Head of caudate nucleus (tissue), 42 donors: ENCODE measurements at regions of chr11 and their contacts with region 1.

Region 1: GRCh38 chr11:64094463-64095260 is 58.9 kb downstream of the FLRT1 start:
- DNase-seq: peak in 23 of 42 donors; percentile 43 to 84 (median 66)

Region 2: DNA sequence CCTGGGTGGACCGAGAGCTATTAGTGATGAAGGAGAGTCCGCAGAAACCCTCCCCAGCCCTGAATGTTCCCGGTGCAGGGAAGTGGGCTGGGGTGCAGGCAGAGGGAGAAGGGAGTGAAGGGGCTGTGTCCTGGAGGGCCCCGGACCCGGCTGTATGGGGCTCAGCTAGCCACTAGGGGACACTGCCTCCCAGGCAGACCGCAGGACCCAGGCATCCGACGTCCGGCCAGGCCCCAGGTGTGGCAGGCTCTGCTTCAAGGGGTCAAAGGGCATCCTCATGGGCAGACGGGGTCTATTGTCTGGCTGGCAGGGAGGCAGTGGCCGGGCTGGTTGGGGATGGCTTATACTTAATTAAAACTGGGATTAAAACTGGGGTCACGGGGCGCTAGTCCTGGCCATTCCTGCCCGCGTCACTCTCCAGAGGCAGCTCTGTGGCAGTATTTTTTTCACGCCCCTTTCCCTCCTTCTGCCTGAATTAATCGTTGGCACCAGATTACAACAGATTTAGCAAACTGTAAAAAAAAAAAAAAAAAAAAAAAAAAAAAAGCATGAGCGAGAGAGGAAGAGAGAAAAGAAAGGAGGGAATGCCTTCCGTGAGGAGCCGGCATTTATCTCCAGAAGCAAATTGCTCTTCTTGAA is 53.9 kb before region 1 on chr11:
- intact Hi-C with region 1: loop called (anchors 2 kb)
- DNase-seq: peak; percentile 52 to 92 (median 77)